ENCODE measurements at regions of chr15 and their contacts with region 1.

Region 1: DNA sequence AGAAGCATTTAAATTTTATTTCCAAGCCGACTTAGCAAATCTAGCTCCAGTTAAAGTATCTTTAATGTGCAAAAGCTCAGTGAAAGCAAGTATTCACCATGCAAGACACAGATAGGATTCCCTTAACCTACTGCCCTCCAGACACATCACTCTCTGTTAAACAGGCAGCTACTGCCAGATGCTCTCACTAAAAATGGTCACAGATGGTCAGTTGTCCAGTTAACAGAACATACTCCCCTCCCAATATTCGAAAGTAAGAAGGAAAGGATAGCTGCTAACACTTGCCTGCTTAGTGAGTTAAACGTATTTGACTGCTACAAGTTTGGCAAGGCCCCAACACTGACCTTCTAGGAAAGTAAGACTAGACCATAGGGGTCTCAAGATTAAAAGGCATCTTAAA is 73.7 kb downstream of the PRTG start:
- DNase-seq: no peak
- H3K4me3 ChIP-seq: no peak overlapping the region
- H3K27ac ChIP-seq: no peak overlapping the region
- H3K4me1 ChIP-seq: no peaks in the 10 kb centered on the region
- H3K27me3 ChIP-seq: no peaks in the 10 kb centered on the region
- CTCF ChIP-seq: no peak
- POLR2A ChIP-seq: no peak

Region 2: DNA sequence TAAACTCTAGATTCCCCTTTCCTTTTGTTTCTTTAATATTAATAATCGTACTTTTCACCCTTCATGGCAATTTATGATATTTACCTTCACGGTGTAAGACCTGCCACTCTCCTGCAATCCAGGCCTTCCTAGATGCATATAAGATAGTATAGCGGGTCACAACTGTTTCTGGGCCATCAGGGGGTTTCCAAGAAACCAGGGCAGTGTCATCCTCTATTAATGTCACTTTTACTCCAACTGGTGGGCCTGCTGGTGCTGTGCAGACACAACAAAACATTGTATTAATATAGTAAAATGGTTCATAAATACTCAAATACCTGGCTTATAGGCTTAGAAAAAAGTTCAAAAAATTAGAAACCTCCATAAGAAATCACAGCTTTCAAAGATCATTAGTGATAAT is 32.2 kb before region 1 on chr15:
- CTCF ChIA-PET with region 1: interaction called, 10 read pairs
- POLR2A ChIA-PET with region 1: no interaction called
- dilution Hi-C with region 1: no loop called
- intact Hi-C with region 1: no loop called
- DNase-seq: no peak
- H3K4me3 ChIP-seq: no peak overlapping the region
- H3K27ac ChIP-seq: no peak overlapping the region
- H3K4me1 ChIP-seq: no peaks in the 10 kb centered on the region
- H3K27me3 ChIP-seq: no peaks in the 10 kb centered on the region
- CTCF ChIP-seq: no peak
- POLR2A ChIP-seq: no peak

Region 3: GRCh38 chr15:55742927-55743728 is 73.9 kb after region 1 on chr15 and contains the start of gene PRTG:
- CTCF ChIA-PET with region 1: no interaction called
- POLR2A ChIA-PET with region 1: no interaction called
- dilution Hi-C with region 1: no loop called
- intact Hi-C with region 1: loop called (anchors 5 kb)
- DNase-seq: peak; percentile 81
- H3K4me3 ChIP-seq: peak within 1 kb of the TSS; percentile 26 to 98 (median 93)
- H3K27ac ChIP-seq: peak within 1 kb of the TSS; percentile 4
- H3K4me1 ChIP-seq: peaks cover 17% of the 10 kb centered on the region
- H3K27me3 ChIP-seq: no peaks in the 10 kb centered on the region
- CTCF ChIP-seq: no peak
- POLR2A ChIP-seq: peak; percentile 46
- total RNA-seq, gene PRTG: 8.2 and 12.4 TPM in 2 replicates

Region 4: GRCh38 chr15:55758580-55758986 is 89.3 kb after region 1 on chr15:
- CTCF ChIA-PET with region 1: no interaction called
- POLR2A ChIA-PET with region 1: no interaction called
- dilution Hi-C with region 1: no loop called
- intact Hi-C with region 1: no loop called
- DNase-seq: no peak
- H3K4me3 ChIP-seq: no peak overlapping the region
- H3K27ac ChIP-seq: no peak overlapping the region
- H3K4me1 ChIP-seq: no peaks in the 10 kb centered on the region
- H3K27me3 ChIP-seq: peaks cover 0 to 2% of the 10 kb centered on the region in 2 experiments
- CTCF ChIP-seq: no peak
- POLR2A ChIP-seq: no peak